SK-N-SH (cell line): ENCODE measurements at regions of chr17 and their contacts with region 1.

Region 1: GRCh38 chr17:55273579-55274354 is 9.0 kb downstream of the HLF start:
- DNase-seq: peak; percentile 68
- H3K4me3 ChIP-seq: no peak overlapping the region
- H3K27ac ChIP-seq: peak overlapping the region in 1 of 2 experiments; percentile 84; a peak in 2 of 4 replicates
- H3K4me1 ChIP-seq: peaks cover 7 to 30% of the 10 kb centered on the region in 2 experiments; a peak in 3 of 4 replicates
- H3K27me3 ChIP-seq: no peaks in the 10 kb centered on the region
- CTCF ChIP-seq: no peak
- EP300 ChIP-seq: 0 out of 4 replicates have a peak, but pooled peaks of 1 of the 2 experiments have one; percentile 41
- RAD21 ChIP-seq: 0 out of 2 replicates have a peak, but pooled peaks have one; percentile 1

Region 2: GRCh38 chr17:55177159-55177854 is 96.5 kb before region 1 on chr17:
- CTCF ChIA-PET with region 1: no interaction called
- POLR2A ChIA-PET with region 1: no interaction called
- DNase-seq: no peak
- H3K4me3 ChIP-seq: no peak overlapping the region
- H3K27ac ChIP-seq: peak overlapping the region in 1 of 2 experiments; percentile 36; a peak in 1 of 4 replicates
- H3K4me1 ChIP-seq: peaks cover 0 to 17% of the 10 kb centered on the region in 2 experiments; a peak in 3 of 4 replicates
- H3K27me3 ChIP-seq: no peaks in the 10 kb centered on the region
- CTCF ChIP-seq: 0 out of 2 replicates have a peak, but pooled peaks have one; percentile 30
- EP300 ChIP-seq: no peak; a peak in 1 of 4 replicates
- RAD21 ChIP-seq: peak; percentile 32; the same call in 1 of the 2 replicates

Region 3: GRCh38 chr17:55285340-55286301 is 11.9 kb after region 1 on chr17:
- CTCF ChIA-PET with region 1: interaction called, 11 read pairs
- POLR2A ChIA-PET with region 1: no interaction called
- DNase-seq: no peak
- H3K4me3 ChIP-seq: no peak overlapping the region
- H3K27ac ChIP-seq: peak overlapping the region in 1 of 2 experiments; percentile 51; a peak in 1 of 4 replicates
- H3K4me1 ChIP-seq: peaks cover 0 to 15% of the 10 kb centered on the region in 2 experiments; a peak in 1 of 4 replicates
- H3K27me3 ChIP-seq: no peaks in the 10 kb centered on the region
- CTCF ChIP-seq: no peak
- EP300 ChIP-seq: no peak
- RAD21 ChIP-seq: no peak

Region 4: GRCh38 chr17:55324296-55324978 is 50.7 kb after region 1 on chr17:
- CTCF ChIA-PET with region 1: no interaction called
- POLR2A ChIA-PET with region 1: no interaction called
- DNase-seq: no peak
- H3K4me3 ChIP-seq: no peak overlapping the region
- H3K27ac ChIP-seq: no peak overlapping the region
- H3K4me1 ChIP-seq: no peaks in the 10 kb centered on the region
- H3K27me3 ChIP-seq: no peaks in the 10 kb centered on the region
- CTCF ChIP-seq: no peak
- EP300 ChIP-seq: no peak
- RAD21 ChIP-seq: no peak